ENCODE measurements at regions of chr1 and their contacts with region 1.

Region 1: DNA sequence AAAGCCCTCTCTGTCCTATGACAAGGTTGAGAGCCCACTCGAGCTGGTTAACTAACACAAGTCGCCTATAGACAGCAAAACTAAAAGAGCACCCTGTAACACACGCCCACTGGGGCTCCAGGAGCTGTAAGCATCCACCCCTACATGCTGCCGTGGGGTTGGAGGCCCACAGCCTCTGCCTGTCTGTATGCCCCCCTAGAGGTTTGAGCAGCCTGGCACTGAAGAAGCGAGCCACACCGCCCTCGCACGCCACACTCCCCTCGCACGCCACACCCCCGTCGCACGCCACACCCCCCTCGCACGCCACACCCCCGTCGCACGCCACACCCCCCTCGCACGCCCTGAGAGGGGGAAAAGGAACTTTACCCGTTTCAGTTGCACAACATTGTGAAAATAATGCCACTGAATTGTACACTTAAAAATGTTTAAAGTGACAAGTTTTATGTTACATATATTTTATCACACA is 13.2 kb upstream of the HMGCL start:
- DNase-seq: peak; percentile 78
- H3K4me3 ChIP-seq: peak overlapping the region; percentile 60
- H3K27ac ChIP-seq: no peak overlapping the region
- H3K4me1 ChIP-seq: peaks cover 20% of the 10 kb centered on the region
- CTCF ChIP-seq: no peak

Region 2: DNA sequence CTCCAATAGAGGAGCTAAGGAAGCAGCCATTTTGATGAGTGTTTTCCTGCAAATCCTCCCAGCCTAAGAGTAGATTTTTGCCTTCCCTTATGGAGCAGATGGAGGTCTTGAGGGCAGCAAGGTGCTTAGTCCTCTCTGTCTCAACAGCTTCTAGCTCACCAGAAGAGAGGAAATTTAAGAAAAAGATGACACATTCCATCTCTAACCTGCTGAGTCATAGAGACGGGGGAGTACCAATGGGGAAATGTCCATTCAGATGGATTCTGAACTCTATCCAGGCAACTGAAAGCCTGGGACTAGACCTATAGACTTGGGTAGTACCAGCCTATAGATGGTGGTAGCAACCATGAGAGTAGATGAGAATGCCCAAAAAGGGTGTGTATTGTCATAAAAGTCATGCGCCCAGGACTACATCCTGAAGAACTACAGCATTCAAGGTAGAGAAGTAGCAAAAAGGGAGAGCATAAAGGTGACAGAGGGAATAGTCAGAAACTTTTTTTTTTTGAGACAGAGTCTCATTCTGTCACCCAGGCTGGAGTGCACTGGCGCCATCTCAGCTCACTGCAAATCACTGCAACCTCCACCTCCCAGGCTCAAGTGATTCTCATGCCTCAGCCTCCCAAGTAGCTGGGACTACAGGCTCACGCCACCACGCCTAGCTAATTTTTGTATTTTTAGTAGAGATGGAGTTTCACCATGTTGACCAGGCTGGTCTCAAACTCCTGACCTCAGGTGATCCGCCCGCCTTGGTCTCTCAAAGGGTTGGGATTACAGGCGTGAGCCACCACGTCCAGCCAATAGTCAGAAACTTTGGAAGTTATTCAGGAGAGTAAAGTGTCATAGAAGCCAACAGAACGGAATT is 105.8 kb before region 1 on chr1:
- CTCF ChIA-PET with region 1: no interaction called
- POLR2A ChIA-PET with region 1: no interaction called
- intact Hi-C with region 1: no loop called
- DNase-seq: no peak
- H3K4me3 ChIP-seq: no peak overlapping the region
- H3K27ac ChIP-seq: no peak overlapping the region
- H3K4me1 ChIP-seq: peaks cover 21% of the 10 kb centered on the region
- CTCF ChIP-seq: no peak

Region 3: DNA sequence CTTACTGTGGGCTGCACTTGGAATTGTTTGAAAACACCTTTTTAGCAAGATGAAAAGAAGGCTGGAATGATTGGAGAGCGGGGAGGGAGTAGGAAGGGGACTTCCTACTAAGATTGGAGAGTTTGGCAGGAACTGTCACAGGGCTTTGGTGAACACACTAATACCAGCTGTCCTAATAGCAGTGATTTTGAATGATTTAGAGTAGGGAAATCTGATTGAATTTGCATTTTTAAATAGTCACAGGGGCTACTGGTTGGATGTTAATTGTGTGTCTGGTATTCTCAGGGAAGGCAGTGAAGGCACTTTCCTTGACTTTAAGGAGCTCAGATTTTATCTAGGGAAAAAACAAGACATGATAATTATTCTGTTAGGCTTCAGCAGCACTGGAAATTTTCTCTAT is 10.7 kb before region 1 on chr1:
- CTCF ChIA-PET with region 1: no interaction called
- POLR2A ChIA-PET with region 1: interaction called, 11 read pairs
- intact Hi-C with region 1: no loop called
- DNase-seq: no peak
- H3K4me3 ChIP-seq: no peak overlapping the region
- H3K27ac ChIP-seq: no peak overlapping the region
- H3K4me1 ChIP-seq: peaks cover 16% of the 10 kb centered on the region
- CTCF ChIP-seq: no peak